GM10248 (cell line): ENCODE measurements at regions of chr6 and their contacts with region 1.

Region 1: DNA sequence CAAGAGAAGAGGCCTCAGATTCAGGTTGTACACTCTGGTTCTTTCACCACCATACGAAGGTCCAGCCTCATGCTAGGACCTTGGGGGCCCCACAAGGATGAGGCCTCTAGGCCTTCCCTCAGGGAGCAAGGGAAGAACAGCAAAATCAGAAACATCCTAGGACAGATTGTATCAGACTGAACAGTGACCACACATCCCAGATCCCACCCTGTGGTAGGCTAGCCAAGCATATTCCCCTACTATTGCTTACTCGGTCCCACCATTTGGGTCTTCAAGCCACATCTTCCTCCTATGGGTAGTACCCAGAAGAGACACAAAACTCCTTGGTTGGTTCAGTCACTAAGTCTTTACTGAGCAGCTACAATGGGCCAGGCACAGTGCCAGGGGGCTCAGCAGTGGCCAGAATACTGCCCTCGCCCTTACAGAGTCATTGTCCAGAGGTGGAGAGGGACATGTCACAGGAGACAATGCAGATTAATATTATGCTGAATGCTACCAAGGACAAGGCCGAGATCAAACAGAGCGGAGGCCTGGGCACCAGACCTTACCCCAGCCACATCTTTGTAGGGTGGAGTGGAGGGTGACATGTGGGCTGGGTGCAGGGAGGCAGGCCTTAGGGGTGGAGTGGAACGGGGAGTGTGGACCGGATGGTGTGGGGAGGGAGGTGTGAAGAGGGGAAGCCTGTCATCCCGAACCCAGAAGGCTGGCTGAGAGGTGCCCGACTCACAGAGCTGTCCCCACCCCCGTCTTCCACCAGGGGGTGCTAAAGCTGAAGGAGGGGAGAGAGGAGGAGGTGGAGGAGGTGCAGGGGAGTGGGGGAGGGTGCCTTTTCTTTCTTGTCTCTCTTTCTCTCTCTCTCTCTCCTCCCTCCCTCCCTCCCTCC is 6.8 kb upstream of the MAPK13 start:
- DNase-seq: peak; percentile 82
- CTCF ChIP-seq: peak; percentile 91

Region 2: GRCh38 chr6:35804996-35805736 is 318.3 kb before region 1 on chr6 and contains the start of gene LHFPL5:
- CTCF ChIA-PET with region 1: no interaction called
- POLR2A ChIA-PET with region 1: no interaction called
- DNase-seq: peak; percentile 89
- CTCF ChIP-seq: no peak

Region 3: GRCh38 chr6:36196113-36196879 is 72.8 kb after region 1 on chr6 and contains the start of gene BRPF3:
- CTCF ChIA-PET with region 1: interaction called, 10 read pairs
- POLR2A ChIA-PET with region 1: no interaction called
- DNase-seq: peak; percentile 84
- CTCF ChIP-seq: peak; percentile 82